ENCODE measurements at regions of chr20 and their contacts with region 1.

Region 1: GRCh38 chr20:36835453-36836198 is 40.3 kb upstream of the TLDC2 start:
- DNase-seq: peak; percentile 90
- ATAC-seq: peak; percentile 93
- H3K4me3 ChIP-seq: peak overlapping the region; percentile 33
- H3K27ac ChIP-seq: peak overlapping the region; percentile 20
- H3K4me1 ChIP-seq: peaks cover 24% of the 10 kb centered on the region
- H3K27me3 ChIP-seq: no peaks in the 10 kb centered on the region
- CTCF ChIP-seq: no peak

Region 2: GRCh38 chr20:36424314-36424713 is 411.3 kb before region 1 on chr20:
- CTCF ChIA-PET with region 1: no interaction called
- POLR2A ChIA-PET with region 1: no interaction called
- intact Hi-C with region 1: no loop called
- DNase-seq: no peak
- ATAC-seq: no peak
- H3K4me3 ChIP-seq: no peak overlapping the region
- H3K27ac ChIP-seq: no peak overlapping the region
- H3K4me1 ChIP-seq: no peaks in the 10 kb centered on the region
- H3K27me3 ChIP-seq: peaks cover 47% of the 10 kb centered on the region
- CTCF ChIP-seq: no peak

Region 3: GRCh38 chr20:36808317-36809257 is 27.0 kb before region 1 on chr20:
- CTCF ChIA-PET with region 1: interaction called, 12 read pairs
- POLR2A ChIA-PET with region 1: no interaction called
- intact Hi-C with region 1: no loop called
- DNase-seq: peak; percentile 66
- ATAC-seq: peak; percentile 64
- H3K4me3 ChIP-seq: no peak overlapping the region
- H3K27ac ChIP-seq: peak overlapping the region; percentile 63
- H3K4me1 ChIP-seq: peaks cover 14% of the 10 kb centered on the region
- H3K27me3 ChIP-seq: no peaks in the 10 kb centered on the region
- CTCF ChIP-seq: peak; percentile 95

Measured in PC-3 (cell line).